ENCODE measurements at regions of chr15 and their contacts with region 1.

Region 1: DNA sequence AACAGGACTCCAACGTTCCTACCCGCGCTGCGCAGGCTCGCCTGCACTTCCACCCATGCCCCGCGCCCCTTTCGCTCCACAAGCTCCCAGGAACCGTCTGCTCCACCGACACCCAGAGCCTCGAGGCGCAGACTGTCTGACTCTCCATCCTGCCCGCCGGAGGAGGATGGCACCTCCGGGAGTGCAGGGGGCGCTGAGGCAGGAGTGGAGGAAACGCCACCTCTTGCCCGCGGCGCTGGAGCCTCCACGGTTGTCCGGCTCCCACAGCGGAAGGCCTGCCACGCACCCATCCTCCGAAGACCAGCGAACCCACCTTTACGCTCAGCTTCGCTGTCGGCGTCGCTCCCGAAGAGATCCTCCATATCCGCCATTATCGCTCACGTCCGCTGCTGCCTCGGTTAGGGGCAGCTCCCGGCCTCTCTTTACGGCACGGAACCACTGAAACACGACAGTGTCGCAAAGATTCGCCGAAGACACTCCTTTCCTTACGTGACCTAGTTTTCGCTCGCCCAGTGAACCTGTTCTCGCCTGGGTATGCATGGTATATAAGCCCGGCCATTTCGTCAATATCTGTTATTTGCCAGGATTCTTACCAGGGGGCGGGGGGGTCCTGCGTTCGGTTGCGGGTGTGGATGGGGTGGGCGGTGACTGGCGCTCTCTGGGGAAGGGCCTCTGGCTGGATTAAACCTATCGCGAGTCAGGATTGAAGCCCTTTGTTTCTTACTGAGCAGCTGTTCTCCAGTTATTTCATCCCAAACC is at the start of gene LEO1:
- DNase-seq: peak; percentile 85 to 91 (median 88)
- H3K4me3 ChIP-seq: peak within 1 kb of the TSS; percentile 83
- H3K27ac ChIP-seq: peak within 1 kb of the TSS; percentile 80 to 92
- H3K4me1 ChIP-seq: peaks cover 7% of the 10 kb centered on the region
- H3K27me3 ChIP-seq: no peaks in the 10 kb centered on the region
- CTCF ChIP-seq: peak in 1 of 3 donors; percentile 26
- EP300 ChIP-seq: no peak
- POLR2A ChIP-seq: no peak
- total RNA-seq, gene LEO1: 6.8 to 12.4 (median 9.6) TPM

Region 2: DNA sequence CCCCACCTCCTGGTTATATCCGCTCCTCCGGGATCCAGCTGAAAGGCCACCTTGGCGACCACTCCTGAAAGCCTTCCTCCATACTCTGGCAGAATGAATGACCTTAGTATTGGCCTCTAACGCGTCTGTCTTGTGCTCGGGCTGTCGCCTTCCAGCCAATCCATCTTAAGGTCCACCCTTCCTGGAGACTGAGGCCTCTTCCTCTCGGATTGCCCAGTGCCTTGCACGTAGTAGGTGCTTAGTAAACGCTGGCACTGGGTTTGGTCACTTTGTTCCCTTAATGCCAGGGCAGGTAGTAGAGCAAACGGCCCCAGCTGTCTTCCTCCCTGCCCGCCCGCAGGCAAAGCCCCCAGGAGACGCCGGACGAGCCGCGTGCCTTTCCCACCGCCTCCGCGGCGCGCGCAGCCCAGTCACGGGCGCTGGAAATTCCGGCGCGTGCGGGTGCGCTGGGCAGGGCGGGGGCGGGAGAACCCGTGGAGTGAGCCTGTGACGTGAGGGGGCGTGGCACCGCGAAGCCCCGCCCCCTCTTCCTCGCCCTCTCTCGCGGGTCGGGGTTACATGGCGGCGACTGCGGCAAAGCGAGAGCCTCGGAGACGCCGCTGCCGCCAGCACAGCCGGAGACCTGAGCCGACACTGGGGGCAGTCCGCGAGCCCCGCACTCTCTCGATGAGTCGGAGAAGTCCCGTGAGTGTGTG is 47.3 kb after region 1 on chr15 and contains the start of gene MAPK6:
- intact Hi-C with region 1: loop called in 2 of 4 experiments (anchors 5 kb)
- DNase-seq: peak; percentile 92 to 98 (median 95)
- H3K4me3 ChIP-seq: peak within 1 kb of the TSS; percentile 84
- H3K27ac ChIP-seq: peak within 1 kb of the TSS; percentile 81 to 92
- H3K4me1 ChIP-seq: peaks cover 6% of the 10 kb centered on the region
- H3K27me3 ChIP-seq: no peaks in the 10 kb centered on the region
- CTCF ChIP-seq: no peak
- EP300 ChIP-seq: peak; percentile 72
- POLR2A ChIP-seq: peak; percentile 93
- total RNA-seq, gene MAPK6: 17.6 to 24.5 (median 21.5) TPM

Region 3: GRCh38 chr15:52078876-52079700 is 107.5 kb after region 1 on chr15:
- intact Hi-C with region 1: loop called in 1 of 4 experiments (anchors 10 kb)
- DNase-seq: peak; percentile 62 to 77 (median 74)
- H3K4me3 ChIP-seq: no peak overlapping the region
- H3K27ac ChIP-seq: no peak overlapping the region
- H3K4me1 ChIP-seq: no peaks in the 10 kb centered on the region
- H3K27me3 ChIP-seq: no peaks in the 10 kb centered on the region
- CTCF ChIP-seq: peak in 2 of 3 donors; percentile 13 to 21
- EP300 ChIP-seq: no peak
- POLR2A ChIP-seq: no peak

Region 4: DNA sequence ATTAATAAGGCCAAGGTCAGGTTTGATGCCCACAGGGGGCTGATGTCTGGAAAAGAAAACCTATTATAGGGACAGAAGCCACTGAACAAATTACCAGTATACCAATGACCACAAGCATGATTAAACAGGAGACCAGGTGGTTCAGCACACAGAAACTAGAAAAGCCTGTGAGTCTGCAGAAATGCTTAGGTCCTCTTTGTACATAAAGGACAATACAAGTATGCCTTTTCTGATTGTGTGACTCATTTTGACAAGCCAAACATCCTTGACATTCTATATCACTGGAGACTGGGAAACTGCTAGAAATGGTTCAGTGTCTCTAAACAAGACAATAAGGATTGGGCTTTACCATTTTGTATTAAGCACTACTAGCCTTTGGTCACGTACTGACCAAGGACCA is 437.3 kb after region 1 on chr15:
- intact Hi-C with region 1: no loop called
- DNase-seq: no peak
- H3K4me3 ChIP-seq: no peak overlapping the region
- H3K27ac ChIP-seq: no peak overlapping the region
- H3K4me1 ChIP-seq: no peaks in the 10 kb centered on the region
- H3K27me3 ChIP-seq: no peaks in the 10 kb centered on the region
- CTCF ChIP-seq: no peak
- EP300 ChIP-seq: no peak
- POLR2A ChIP-seq: no peak

Measured in ovary (tissue), 10 donors.